Naive thymus-derived CD4-positive, alpha-beta T cell (primary cell): ENCODE measurements at regions of chr10 and their contacts with region 1.

Region 1: GRCh38 chr10:127853868-127854768 is 38.6 kb downstream of the CLRN3 start:
- DNase-seq: peak in 8 of 9 donors; percentile 4 to 47 (median 39)
- ATAC-seq: peak; percentile 79
- H3K4me3 ChIP-seq: no peak overlapping the region
- H3K4me3 Mint-ChIP-seq: no peak overlapping the region
- H3K27ac ChIP-seq: no peak overlapping the region
- H3K27ac Mint-ChIP-seq: peak overlapping the region in 1 of 9 donors; percentile 6
- H3K4me1 ChIP-seq: no peaks in the 10 kb centered on the region
- H3K4me1 Mint-ChIP-seq: peaks cover 0 to 9% (median 6%) of the 10 kb centered on the region in 7 donors
- H3K27me3 ChIP-seq: no peaks in the 10 kb centered on the region
- H3K27me3 Mint-ChIP-seq: peaks cover 0 to 12% (median 7%) of the 10 kb centered on the region in 5 donors

Region 2: GRCh38 chr10:125868372-125868975 is 1985.6 kb before region 1 on chr10:
- CTCF ChIA-PET with region 1: no interaction called
- POLR2A ChIA-PET with region 1: no interaction called
- intact Hi-C with region 1: loop called in 1 of 2 experiments (anchors 1 kb)
- DNase-seq: peak in 6 of 9 donors; percentile 13 to 31 (median 17)
- ATAC-seq: peak; percentile 52
- H3K4me3 ChIP-seq: no peak overlapping the region
- H3K4me3 Mint-ChIP-seq: no peak overlapping the region
- H3K27ac ChIP-seq: no peak overlapping the region
- H3K27ac Mint-ChIP-seq: no peak overlapping the region
- H3K4me1 ChIP-seq: no peaks in the 10 kb centered on the region
- H3K4me1 Mint-ChIP-seq: peaks cover 0 to 4% (median 0%) of the 10 kb centered on the region in 7 donors
- H3K27me3 ChIP-seq: no peaks in the 10 kb centered on the region
- H3K27me3 Mint-ChIP-seq: no peaks in the 10 kb centered on the region

Region 3: GRCh38 chr10:125982260-125982948 is 1871.7 kb before region 1 on chr10:
- CTCF ChIA-PET with region 1: interaction called, 5 read pairs
- POLR2A ChIA-PET with region 1: no interaction called
- intact Hi-C with region 1: loop called in 1 of 2 experiments (anchors 2 kb)
- DNase-seq: peak in 5 of 9 donors; percentile 19 to 39 (median 27)
- ATAC-seq: peak; percentile 63
- H3K4me3 ChIP-seq: no peak overlapping the region
- H3K4me3 Mint-ChIP-seq: no peak overlapping the region
- H3K27ac ChIP-seq: no peak overlapping the region
- H3K27ac Mint-ChIP-seq: no peak overlapping the region
- H3K4me1 ChIP-seq: no peaks in the 10 kb centered on the region
- H3K4me1 Mint-ChIP-seq: no peaks in the 10 kb centered on the region
- H3K27me3 ChIP-seq: no peaks in the 10 kb centered on the region
- H3K27me3 Mint-ChIP-seq: peaks cover 0 to 26% (median 10%) of the 10 kb centered on the region in 5 donors

Region 4: GRCh38 chr10:127243490-127244272 is 610.4 kb before region 1 on chr10:
- CTCF ChIA-PET with region 1: interaction called, 3 read pairs
- POLR2A ChIA-PET with region 1: no interaction called
- intact Hi-C with region 1: loop called in 1 of 2 experiments (anchors 5 kb)
- DNase-seq: peak in 6 of 9 donors; percentile 11 to 31 (median 24)
- ATAC-seq: peak; percentile 59
- H3K4me3 ChIP-seq: no peak overlapping the region
- H3K4me3 Mint-ChIP-seq: no peak overlapping the region
- H3K27ac ChIP-seq: no peak overlapping the region
- H3K27ac Mint-ChIP-seq: peak overlapping the region in 1 of 9 donors; percentile 39
- H3K4me1 ChIP-seq: no peaks in the 10 kb centered on the region
- H3K4me1 Mint-ChIP-seq: peaks cover 0 to 4% (median 0%) of the 10 kb centered on the region in 7 donors
- H3K27me3 ChIP-seq: no peaks in the 10 kb centered on the region
- H3K27me3 Mint-ChIP-seq: peaks cover 4 to 16% (median 6%) of the 10 kb centered on the region in 5 donors

Region 5: DNA sequence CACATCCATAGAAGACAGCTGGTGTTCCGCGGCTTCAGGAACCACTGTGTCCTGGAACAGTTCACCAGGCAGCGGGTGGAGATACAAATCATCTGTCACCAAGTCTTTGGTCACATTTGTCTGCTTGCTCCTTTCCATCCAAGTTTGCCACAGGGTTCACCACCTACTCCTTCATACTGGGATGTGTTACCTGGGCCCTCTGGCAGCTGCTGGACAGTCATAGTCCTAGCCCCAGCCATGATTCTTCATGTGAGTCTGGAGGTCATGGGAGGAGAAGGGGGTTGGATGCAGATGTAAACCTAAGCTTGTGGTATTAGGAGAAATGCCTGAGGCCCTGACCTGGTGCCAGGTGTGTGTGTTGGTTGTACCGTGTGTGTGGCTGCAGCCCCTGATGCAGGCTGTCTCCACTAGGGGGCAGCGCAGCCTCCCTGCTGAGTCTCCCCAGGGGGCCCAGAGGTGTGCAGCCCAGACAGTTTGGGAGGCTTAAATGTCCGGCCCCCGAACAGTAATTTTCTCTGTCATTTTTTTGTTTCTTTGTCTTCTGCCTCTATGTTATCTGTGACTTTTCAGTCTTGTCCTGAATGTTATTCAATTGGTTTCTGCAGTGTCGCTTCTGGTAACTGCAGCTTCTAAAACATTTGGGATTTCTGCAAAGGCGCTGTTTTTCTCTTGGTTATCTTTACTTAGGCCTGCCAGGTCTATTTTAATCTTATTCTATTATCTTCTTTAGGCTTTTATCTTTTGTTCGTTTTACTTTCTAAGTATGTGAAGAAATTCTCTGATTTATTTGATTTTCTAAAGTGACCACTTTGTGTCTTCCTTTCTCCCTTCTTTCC is 290.2 kb before region 1 on chr10:
- CTCF ChIA-PET with region 1: no interaction called
- POLR2A ChIA-PET with region 1: no interaction called
- intact Hi-C with region 1: loop called in 1 of 2 experiments (anchors 2 kb)
- DNase-seq: peak in 3 of 9 donors; percentile 5 to 28 (median 8)
- ATAC-seq: peak; percentile 51
- H3K4me3 ChIP-seq: no peak overlapping the region
- H3K4me3 Mint-ChIP-seq: no peak overlapping the region
- H3K27ac ChIP-seq: no peak overlapping the region
- H3K27ac Mint-ChIP-seq: no peak overlapping the region
- H3K4me1 ChIP-seq: no peaks in the 10 kb centered on the region
- H3K4me1 Mint-ChIP-seq: no peaks in the 10 kb centered on the region
- H3K27me3 ChIP-seq: no peaks in the 10 kb centered on the region
- H3K27me3 Mint-ChIP-seq: peaks cover 0 to 46% (median 26%) of the 10 kb centered on the region in 5 donors

Region 6: GRCh38 chr10:127649642-127650041 is 204.5 kb before region 1 on chr10:
- CTCF ChIA-PET with region 1: no interaction called
- POLR2A ChIA-PET with region 1: no interaction called
- intact Hi-C with region 1: loop called in 1 of 2 experiments (anchors 5 kb)
- DNase-seq: no peak
- ATAC-seq: no peak
- H3K4me3 ChIP-seq: no peak overlapping the region
- H3K4me3 Mint-ChIP-seq: no peak overlapping the region
- H3K27ac ChIP-seq: no peak overlapping the region
- H3K27ac Mint-ChIP-seq: no peak overlapping the region
- H3K4me1 ChIP-seq: no peaks in the 10 kb centered on the region
- H3K4me1 Mint-ChIP-seq: no peaks in the 10 kb centered on the region
- H3K27me3 ChIP-seq: no peaks in the 10 kb centered on the region
- H3K27me3 Mint-ChIP-seq: peaks cover 0 to 4% (median 0%) of the 10 kb centered on the region in 5 donors

Region 7: GRCh38 chr10:127715782-127716378 is 138.2 kb before region 1 on chr10:
- CTCF ChIA-PET with region 1: interaction called, 3 read pairs
- POLR2A ChIA-PET with region 1: no interaction called
- intact Hi-C with region 1: loop called in 1 of 2 experiments (anchors 1 kb)
- DNase-seq: peak in 1 of 9 donors; percentile 1
- ATAC-seq: no peak
- H3K4me3 ChIP-seq: no peak overlapping the region
- H3K4me3 Mint-ChIP-seq: no peak overlapping the region
- H3K27ac ChIP-seq: no peak overlapping the region
- H3K27ac Mint-ChIP-seq: no peak overlapping the region
- H3K4me1 ChIP-seq: no peaks in the 10 kb centered on the region
- H3K4me1 Mint-ChIP-seq: no peaks in the 10 kb centered on the region
- H3K27me3 ChIP-seq: no peaks in the 10 kb centered on the region
- H3K27me3 Mint-ChIP-seq: peaks cover 0 to 7% (median 4%) of the 10 kb centered on the region in 5 donors